PC-9 (cell line): ENCODE measurements at regions of chr2 and their contacts with region 1.

Region 1: GRCh38 chr2:204072443-204073324 is 136.1 kb downstream of the ICOS start:
- DNase-seq: peak in 1 of 2 experiments; percentile 2
- H3K4me3 ChIP-seq: no peak overlapping the region
- H3K27ac ChIP-seq: no peak overlapping the region
- H3K4me1 ChIP-seq: no peaks in the 10 kb centered on the region
- H3K27me3 ChIP-seq: peaks cover 27% of the 10 kb centered on the region
- CTCF ChIP-seq: peak; percentile 47; the same call in 1 of the 2 replicates

Region 2: DNA sequence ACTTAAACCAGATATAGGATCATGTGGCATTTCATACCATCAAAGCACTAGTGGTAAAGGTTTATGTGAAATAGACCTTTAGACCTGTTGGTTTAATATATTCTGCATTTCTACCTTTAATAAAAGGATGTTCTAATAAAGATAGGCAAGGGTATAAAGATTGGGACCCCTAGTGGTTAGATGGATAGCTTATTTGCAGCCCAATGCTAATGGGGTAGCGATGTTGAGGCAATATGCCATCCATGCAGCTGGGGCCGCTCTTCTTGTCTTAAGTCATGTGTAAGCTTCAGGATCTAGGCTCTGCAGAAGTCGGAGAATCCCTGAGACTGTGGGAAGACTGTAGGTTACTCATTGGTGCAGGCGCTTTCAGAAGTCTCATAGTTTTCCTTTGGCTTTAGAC is 21.2 kb before region 1 on chr2:
- CTCF ChIA-PET with region 1: no interaction called
- POLR2A ChIA-PET with region 1: no interaction called
- intact Hi-C with region 1: no loop called
- DNase-seq: no peak
- H3K4me3 ChIP-seq: no peak overlapping the region
- H3K27ac ChIP-seq: no peak overlapping the region
- H3K4me1 ChIP-seq: no peaks in the 10 kb centered on the region
- H3K27me3 ChIP-seq: peaks cover 26% of the 10 kb centered on the region
- CTCF ChIP-seq: no peak; the same call in 1 of the 2 replicates

Region 3: DNA sequence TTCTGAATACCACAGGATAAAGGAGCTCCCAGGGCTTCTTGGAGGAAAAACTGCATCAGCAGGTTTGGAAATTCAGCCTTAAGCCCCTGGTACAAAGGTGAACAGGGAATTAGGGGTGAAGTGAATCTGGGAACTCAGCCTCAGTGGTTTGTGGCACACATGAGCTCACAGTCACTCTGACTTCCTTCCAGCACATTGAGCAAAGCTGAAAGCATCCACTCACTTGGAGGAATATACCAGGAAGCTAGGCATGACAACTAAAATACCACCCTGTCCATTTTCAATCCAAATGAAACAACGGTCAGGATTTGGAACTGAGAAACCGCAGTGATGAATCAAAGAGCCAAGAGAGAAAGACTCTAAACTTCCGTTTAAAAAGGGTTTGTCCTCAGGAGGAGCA is 79.9 kb after region 1 on chr2:
- CTCF ChIA-PET with region 1: no interaction called
- POLR2A ChIA-PET with region 1: no interaction called
- intact Hi-C with region 1: no loop called
- DNase-seq: no peak
- H3K4me3 ChIP-seq: no peak overlapping the region
- H3K27ac ChIP-seq: no peak overlapping the region
- H3K4me1 ChIP-seq: no peaks in the 10 kb centered on the region
- H3K27me3 ChIP-seq: peaks cover 30% of the 10 kb centered on the region; the same call in 1 of the 2 replicates
- CTCF ChIP-seq: no peak

Region 4: GRCh38 chr2:204923957-204924356 is 851.3 kb after region 1 on chr2:
- CTCF ChIA-PET with region 1: interaction called, 13 read pairs
- POLR2A ChIA-PET with region 1: no interaction called
- intact Hi-C with region 1: no loop called
- DNase-seq: no peak
- H3K4me3 ChIP-seq: no peak overlapping the region
- H3K27ac ChIP-seq: no peak overlapping the region
- H3K4me1 ChIP-seq: no peaks in the 10 kb centered on the region
- H3K27me3 ChIP-seq: no peaks in the 10 kb centered on the region
- CTCF ChIP-seq: no peak

Region 5: GRCh38 chr2:205086662-205087061 is 1014.0 kb after region 1 on chr2:
- CTCF ChIA-PET with region 1: no interaction called
- POLR2A ChIA-PET with region 1: no interaction called
- intact Hi-C with region 1: no loop called
- DNase-seq: no peak
- H3K4me3 ChIP-seq: no peak overlapping the region
- H3K27ac ChIP-seq: no peak overlapping the region
- H3K4me1 ChIP-seq: no peaks in the 10 kb centered on the region
- H3K27me3 ChIP-seq: no peaks in the 10 kb centered on the region
- CTCF ChIP-seq: no peak